Posterior cingulate gyrus (tissue), 11 donors: ENCODE measurements at regions of chr16 and their contacts with region 1.

Region 1: GRCh38 chr16:58336332-58337089 is 41.7 kb upstream of the PRSS54 start:
- DNase-seq: peak; percentile 67 to 96 (median 88)

Region 2: GRCh38 chr16:58487566-58488351 is 151.2 kb after region 1 on chr16:
- intact Hi-C with region 1: loop called (anchors 2 kb)
- DNase-seq: peak; percentile 76 to 98 (median 86)

Region 3: GRCh38 chr16:58661199-58661830 is 324.8 kb after region 1 on chr16:
- intact Hi-C with region 1: loop called (anchors 2 kb)
- DNase-seq: peak in 1 of 10 donors; percentile 17

Region 4: DNA sequence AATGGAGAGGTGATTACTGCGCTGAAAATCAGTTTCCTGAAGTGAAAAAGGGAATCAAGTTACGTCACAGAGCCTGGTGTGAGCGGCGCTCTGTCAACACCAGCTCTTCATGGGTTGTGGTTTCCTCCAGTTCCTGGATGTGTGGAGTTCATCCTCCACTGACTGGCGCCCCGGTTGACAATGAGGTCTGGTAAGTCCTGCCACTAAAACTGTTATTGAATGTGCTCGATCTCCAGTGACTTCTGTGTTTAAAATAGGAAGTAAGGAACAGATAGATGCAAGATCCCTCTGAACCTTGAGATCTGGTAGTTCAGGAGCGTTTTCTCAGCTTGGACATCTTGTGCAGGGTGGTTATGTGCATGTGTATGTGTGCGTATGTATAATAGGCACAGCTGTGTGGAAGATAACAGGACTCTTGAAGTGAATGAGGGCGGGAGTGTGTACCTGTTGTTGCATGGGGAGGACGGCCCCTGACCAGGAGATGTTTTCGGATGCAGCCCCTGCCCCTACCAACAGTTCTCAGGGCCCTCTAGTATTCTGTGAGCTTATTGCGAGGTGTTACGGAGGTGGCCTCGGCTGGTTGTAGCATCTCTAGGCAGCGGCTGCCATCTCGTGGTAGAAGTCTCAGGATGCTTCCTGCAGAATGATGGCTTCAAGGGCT is 419.6 kb after region 1 on chr16:
- intact Hi-C with region 1: loop called (anchors 10 kb)
- DNase-seq: peak; percentile 63 to 96 (median 81)